A549 (cell line): ENCODE measurements at regions of chr15 and their contacts with region 1.

Region 1: DNA sequence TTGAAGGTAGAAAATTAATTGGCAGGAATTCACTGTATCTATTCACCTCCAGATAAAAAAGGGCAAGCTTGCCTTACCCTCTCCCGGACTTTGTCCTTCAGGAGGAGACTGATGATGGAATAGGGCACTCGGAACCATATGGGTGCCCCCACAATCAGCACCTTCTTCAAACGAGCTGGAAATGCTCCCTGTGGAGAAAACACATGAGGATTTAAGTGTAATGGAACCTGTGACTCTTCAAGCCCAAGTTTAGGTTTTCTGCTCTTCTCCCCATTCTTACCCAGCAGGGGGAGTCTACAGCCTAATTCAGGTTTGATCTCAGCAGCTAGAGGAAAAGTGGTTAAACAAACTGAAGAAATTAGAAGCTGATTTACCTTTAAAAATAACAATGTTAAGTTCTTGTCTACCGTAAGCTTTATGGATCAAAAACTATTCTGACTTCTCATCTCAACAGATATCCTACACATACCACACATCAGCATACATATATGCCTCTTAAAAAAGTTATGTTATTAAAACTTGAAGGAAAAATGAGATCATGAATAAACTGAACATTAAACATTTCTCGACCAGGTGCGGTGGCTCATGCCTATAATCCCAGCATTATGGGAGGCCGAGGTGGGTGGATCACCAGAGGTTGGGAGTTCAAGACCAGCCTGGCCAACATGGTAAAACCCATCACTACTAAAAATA is 57.5 kb upstream of the SIN3A start:
- DNase-seq: peak; percentile 33 to 70
- ATAC-seq: peak; percentile 86 to 92
- H3K4me3 ChIP-seq: no peak overlapping the region
- H3K27ac ChIP-seq: no peak overlapping the region
- H3K4me1 ChIP-seq: no peaks in the 10 kb centered on the region
- CTCF ChIP-seq: peak; percentile 63
- EP300 ChIP-seq: no peak
- POLR2A ChIP-seq: no peak
- RAD21 ChIP-seq: peak; percentile 60 to 69

Region 2: GRCh38 chr15:75493732-75494131 is 15.3 kb before region 1 on chr15:
- CTCF ChIA-PET with region 1: interaction called, 17 read pairs
- POLR2A ChIA-PET with region 1: no interaction called
- DNase-seq: no peak
- ATAC-seq: no peak
- H3K4me3 ChIP-seq: no peak overlapping the region
- H3K27ac ChIP-seq: no peak overlapping the region
- H3K4me1 ChIP-seq: no peaks in the 10 kb centered on the region
- CTCF ChIP-seq: no peak
- EP300 ChIP-seq: no peak
- POLR2A ChIP-seq: no peak
- RAD21 ChIP-seq: no peak

Region 3: GRCh38 chr15:75523011-75523410 is 14.0 kb after region 1 on chr15:
- CTCF ChIA-PET with region 1: interaction called, 19 read pairs
- POLR2A ChIA-PET with region 1: no interaction called
- DNase-seq: no peak
- ATAC-seq: no peak
- H3K4me3 ChIP-seq: no peak overlapping the region
- H3K27ac ChIP-seq: peak overlapping the region; percentile 1 to 18; a peak in 2 of 6 replicates
- H3K4me1 ChIP-seq: peaks cover 6% of the 10 kb centered on the region; the same call in 1 of the 3 replicates
- CTCF ChIP-seq: no peak
- EP300 ChIP-seq: no peak
- POLR2A ChIP-seq: no peak
- RAD21 ChIP-seq: no peak

Region 4: DNA sequence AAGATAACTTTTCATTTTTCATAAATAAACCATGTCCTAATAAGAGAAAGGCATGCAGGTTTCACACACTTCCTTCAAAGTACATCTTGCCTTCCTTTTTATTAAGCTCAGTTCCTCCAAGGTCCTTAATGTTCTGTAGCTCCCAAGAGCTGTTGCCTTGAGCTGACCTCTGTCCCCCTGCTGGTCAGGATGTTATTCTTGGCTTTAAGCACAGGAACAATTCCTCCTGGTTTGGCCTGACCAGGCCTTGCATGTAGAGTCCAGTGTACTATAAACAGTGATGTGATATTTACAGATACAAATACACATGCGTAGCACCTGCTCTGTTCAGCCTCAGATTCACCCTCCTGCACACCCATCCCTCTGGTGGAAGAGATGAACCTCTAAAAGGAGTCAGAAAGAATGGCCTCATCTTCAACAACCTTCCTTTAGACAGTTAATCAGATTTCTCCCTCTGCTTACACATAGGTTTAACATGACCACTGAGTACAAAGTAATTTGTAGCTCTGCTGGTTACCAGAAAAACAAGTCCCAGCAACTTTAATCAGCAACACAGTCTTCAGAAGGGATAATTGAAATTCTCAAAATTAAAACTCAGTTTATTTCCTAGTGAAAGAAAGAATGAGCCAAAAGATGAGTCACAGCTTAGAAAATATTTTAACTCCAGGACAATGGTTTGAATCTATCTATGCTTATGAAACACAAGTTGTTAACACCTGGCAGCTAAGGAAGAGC is 23.6 kb after region 1 on chr15:
- CTCF ChIA-PET with region 1: interaction called, 10 read pairs
- POLR2A ChIA-PET with region 1: interaction called, 4 read pairs
- DNase-seq: peak; percentile 64 to 84
- ATAC-seq: peak; percentile 96
- H3K4me3 ChIP-seq: no peak overlapping the region
- H3K27ac ChIP-seq: peak overlapping the region; percentile 53 to 56; a peak in 5 of 6 replicates
- H3K4me1 ChIP-seq: peaks cover 39% of the 10 kb centered on the region
- CTCF ChIP-seq: peak; percentile 62
- EP300 ChIP-seq: no peak
- POLR2A ChIP-seq: no peak
- RAD21 ChIP-seq: peak in 1 of 2 experiments; percentile 38; a peak in 3 of 5 replicates

Region 5: GRCh38 chr15:75565062-75565970 is 56.3 kb after region 1 on chr15:
- CTCF ChIA-PET with region 1: interaction called, 16 read pairs
- POLR2A ChIA-PET with region 1: no interaction called
- DNase-seq: no peak
- ATAC-seq: peak; percentile 49 to 66; a peak in 5 of 6 replicates
- H3K4me3 ChIP-seq: no peak overlapping the region
- H3K27ac ChIP-seq: peak overlapping the region in 1 of 2 experiments; percentile 1; a peak in 1 of 6 replicates
- H3K4me1 ChIP-seq: peaks cover 11% of the 10 kb centered on the region
- CTCF ChIP-seq: no peak
- EP300 ChIP-seq: no peak
- POLR2A ChIP-seq: no peak
- RAD21 ChIP-seq: no peak